OCI-LY7 (cell line): ENCODE measurements at regions of chr2 and their contacts with region 1.

Region 1: GRCh38 chr2:62760555-62760954 is 55.0 kb downstream of the EHBP1 start:
- DNase-seq: no peak
- H3K4me3 ChIP-seq: no peak overlapping the region
- H3K27ac ChIP-seq: no peak overlapping the region
- H3K4me1 ChIP-seq: no peaks in the 10 kb centered on the region
- CTCF ChIP-seq: no peak

Region 2: GRCh38 chr2:62641410-62641843 is 119.1 kb before region 1 on chr2:
- CTCF ChIA-PET with region 1: no interaction called
- POLR2A ChIA-PET with region 1: interaction called, 10 read pairs
- intact Hi-C with region 1: no loop called
- DNase-seq: no peak
- H3K4me3 ChIP-seq: no peak overlapping the region
- H3K27ac ChIP-seq: no peak overlapping the region
- H3K4me1 ChIP-seq: no peaks in the 10 kb centered on the region
- CTCF ChIP-seq: no peak

Region 3: GRCh38 chr2:62856228-62857040 is 95.9 kb after region 1 on chr2:
- CTCF ChIA-PET with region 1: no interaction called
- POLR2A ChIA-PET with region 1: interaction called, 10 read pairs
- intact Hi-C with region 1: no loop called
- DNase-seq: no peak
- H3K4me3 ChIP-seq: no peak overlapping the region
- H3K27ac ChIP-seq: no peak overlapping the region
- H3K4me1 ChIP-seq: no peaks in the 10 kb centered on the region
- CTCF ChIP-seq: no peak